Thyroid gland (tissue), 4 donors: ENCODE measurements at regions of chr7 and their contacts with region 1.

Region 1: DNA sequence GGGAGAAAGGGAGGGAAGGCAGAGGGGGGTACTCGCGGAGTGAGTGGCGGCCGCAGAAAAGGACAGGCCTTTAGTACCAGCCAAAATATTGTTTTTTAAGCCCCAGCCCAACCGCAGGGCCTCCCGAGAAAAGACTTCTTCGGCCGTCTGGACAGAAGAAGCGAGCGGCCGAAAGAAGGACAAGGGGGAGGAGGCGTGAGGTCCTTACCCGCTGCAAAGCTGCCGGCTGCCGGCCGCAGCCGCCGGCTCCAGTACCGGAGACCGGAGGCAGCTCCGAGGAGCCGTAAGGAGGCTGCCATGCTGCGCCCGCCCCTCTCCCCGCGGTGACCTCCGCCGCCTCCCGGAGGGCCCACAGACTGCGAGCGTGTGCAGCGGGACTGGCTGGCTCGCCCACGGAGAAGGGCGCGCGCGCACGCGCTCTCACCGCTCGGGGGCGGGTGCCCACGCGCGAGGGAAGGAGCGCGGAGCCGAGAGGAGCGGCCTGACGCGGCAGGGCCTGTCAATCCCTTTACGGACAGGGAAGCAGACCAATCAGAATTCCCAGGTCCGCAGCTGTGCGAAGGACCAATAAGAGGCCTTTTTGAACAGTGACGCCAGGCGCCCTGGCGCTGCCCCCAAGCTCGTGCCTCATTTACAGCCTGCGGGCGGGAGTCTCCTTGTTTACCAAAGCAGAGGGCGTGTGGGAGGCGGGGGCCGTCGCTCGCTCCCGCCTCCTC is at the start of gene HIBADH:
- DNase-seq: peak; percentile 99
- H3K4me3 ChIP-seq: peak within 1 kb of the TSS; percentile 9 to 78 (median 76)
- H3K27ac ChIP-seq: peak within 1 kb of the TSS; percentile 76 to 96 (median 92)
- H3K4me1 ChIP-seq: peaks cover 3 to 7% of the 10 kb centered on the region in 2 donors
- H3K27me3 ChIP-seq: no peaks in the 10 kb centered on the region
- CTCF ChIP-seq: peak in 3 of 6 experiments; percentile 21 to 43 (median 22)
- POLR2A ChIP-seq: peak; percentile 88 to 97
- total RNA-seq, gene HIBADH: 73.7 to 99.9 (median 84.4) TPM

Region 2: DNA sequence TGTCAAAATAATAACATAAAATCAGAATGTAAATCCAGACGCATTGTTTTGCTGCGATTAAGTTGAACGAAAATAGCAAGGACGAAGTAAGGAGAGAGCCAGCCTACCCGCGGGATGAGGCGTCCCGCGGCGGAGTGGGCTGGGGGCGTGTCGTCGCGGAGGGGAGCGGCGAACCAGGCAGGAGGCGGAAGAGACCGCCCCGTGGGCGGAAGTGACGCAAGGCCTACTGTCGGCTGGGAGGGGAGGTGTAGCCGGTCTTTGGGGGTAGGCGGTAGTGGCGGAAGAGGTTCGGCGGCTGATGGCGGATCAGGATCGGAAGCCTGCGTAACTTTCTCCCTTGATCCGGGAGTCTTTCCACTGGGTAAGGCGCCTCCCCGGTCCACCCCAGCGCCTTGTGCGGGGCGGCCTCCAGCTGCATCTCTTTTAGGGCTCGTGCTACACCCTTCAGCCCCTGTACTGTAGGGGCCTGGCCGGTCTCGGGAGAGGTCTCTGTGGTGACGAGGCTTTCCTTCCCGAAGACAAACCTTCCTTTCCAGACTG is 77.3 kb after region 1 on chr7 and contains the start of gene TAX1BP1:
- intact Hi-C with region 1: loop called (anchors 5 kb)
- DNase-seq: peak; percentile 96
- H3K4me3 ChIP-seq: peak within 1 kb of the TSS; percentile 71 to 100 (median 90)
- H3K27ac ChIP-seq: peak within 1 kb of the TSS; percentile 88 to 96 (median 94)
- H3K4me1 ChIP-seq: peaks cover 6 to 16% of the 10 kb centered on the region in 2 donors
- H3K27me3 ChIP-seq: no peaks in the 10 kb centered on the region
- CTCF ChIP-seq: no peak
- POLR2A ChIP-seq: peak; percentile 84 to 97
- total RNA-seq, gene TAX1BP1: 97.7 to 143 (median 120) TPM

Region 3: DNA sequence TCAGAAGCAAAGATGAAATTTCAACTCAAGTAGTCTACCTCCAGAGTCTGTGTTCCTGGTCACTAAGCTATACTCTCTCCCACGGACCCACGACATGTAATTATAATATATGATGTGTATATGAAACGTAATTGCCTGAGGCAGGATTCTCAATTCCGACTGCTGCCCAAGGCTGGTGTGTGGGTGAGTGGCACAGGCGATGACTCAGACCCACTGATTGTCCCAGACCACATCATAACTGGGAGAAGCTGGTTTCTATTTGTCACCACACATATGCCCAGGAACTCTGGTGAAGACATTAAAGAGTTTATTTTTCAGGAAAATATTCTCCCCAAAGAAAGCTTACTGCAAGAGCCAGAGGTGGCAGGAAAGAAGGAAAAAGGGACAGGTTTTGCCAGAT is 298.6 kb after region 1 on chr7:
- intact Hi-C with region 1: no loop called
- DNase-seq: no peak
- H3K4me3 ChIP-seq: no peak overlapping the region
- H3K27ac ChIP-seq: no peak overlapping the region
- H3K4me1 ChIP-seq: peaks cover 0 to 6% of the 10 kb centered on the region in 2 donors
- H3K27me3 ChIP-seq: no peaks in the 10 kb centered on the region
- CTCF ChIP-seq: no peak
- POLR2A ChIP-seq: no peak